Mammary epithelial cell (primary cell): ENCODE measurements at regions of chr6 and their contacts with region 1.

Region 1: DNA sequence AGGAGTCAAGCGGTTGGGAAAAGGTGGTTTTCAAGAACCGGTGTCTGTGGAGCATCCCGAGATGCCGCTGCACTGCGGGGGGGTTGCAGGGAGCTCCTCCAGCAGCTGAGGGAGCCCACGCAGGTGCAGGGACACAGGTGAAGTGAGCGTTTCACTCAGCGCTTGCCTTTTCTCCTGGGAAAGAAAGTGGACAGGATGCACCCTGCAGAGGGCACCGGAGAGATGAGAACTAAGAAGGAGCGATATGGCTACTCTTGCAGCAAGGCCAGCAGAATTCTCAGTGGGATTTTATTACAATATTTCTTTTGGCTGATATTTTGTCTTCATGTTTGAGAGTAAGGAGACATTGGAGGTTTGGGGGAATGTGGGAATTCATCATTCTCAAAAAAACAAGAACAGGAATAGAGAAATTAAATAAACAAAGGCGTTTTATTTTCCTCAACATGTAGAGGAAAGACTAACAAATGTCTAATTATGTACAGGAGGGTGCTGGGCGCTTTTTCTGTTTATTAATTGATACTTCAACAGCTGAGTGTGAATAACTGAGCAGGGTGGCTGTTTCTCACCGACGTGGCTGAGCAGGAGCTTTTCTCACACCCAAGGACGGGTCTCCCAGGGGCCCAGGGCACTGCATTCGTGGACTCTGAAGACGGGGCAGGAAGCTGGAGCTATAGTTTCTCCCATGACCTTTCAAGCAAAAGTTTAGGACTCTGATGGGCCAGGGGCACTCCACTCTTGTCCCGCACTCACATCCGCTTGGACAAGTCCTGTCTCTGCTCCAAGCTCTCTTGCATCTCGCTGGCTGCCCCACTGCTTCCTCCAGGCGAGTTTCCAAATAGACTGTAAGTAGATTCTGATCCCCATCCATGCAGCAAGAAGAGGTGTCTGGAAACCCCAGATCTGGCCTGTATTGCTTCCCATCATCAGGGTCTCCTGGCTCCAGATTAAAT is 176.1 kb downstream of the SMOC2 start:
- DNase-seq: no peak
- H3K4me3 ChIP-seq: no peak overlapping the region
- H3K27ac ChIP-seq: no peak overlapping the region
- H3K4me1 ChIP-seq: no peaks in the 10 kb centered on the region
- H3K27me3 ChIP-seq: no peaks in the 10 kb centered on the region
- CTCF ChIP-seq: no peak

Region 2: DNA sequence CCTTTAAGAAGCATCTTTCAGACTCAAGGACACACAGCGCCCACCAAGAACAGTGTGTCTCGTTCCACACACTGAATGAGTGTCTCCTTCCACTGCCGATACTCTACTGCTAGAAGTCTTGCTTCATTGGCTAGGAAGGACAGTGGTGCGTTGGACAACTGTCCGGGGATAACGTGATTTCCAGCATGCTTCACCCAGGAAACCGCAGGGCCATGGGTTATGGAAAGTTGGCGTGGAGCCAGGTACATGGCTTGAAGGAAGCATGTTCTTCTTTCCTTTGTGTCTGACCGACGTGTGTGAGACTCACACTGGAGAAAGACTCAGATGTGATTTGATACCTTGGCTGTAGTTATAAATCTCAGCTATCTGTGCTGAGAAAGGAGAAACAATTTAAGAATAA is 102.9 kb before region 1 on chr6:
- CTCF ChIA-PET with region 1: no interaction called
- dilution Hi-C with region 1: no loop called
- in situ Hi-C with region 1: no loop called
- intact Hi-C with region 1: no loop called
- DNase-seq: no peak
- H3K4me3 ChIP-seq: no peak overlapping the region
- H3K27ac ChIP-seq: no peak overlapping the region
- H3K4me1 ChIP-seq: no peaks in the 10 kb centered on the region
- H3K27me3 ChIP-seq: no peaks in the 10 kb centered on the region
- CTCF ChIP-seq: no peak

Region 3: GRCh38 chr6:168574699-168575195 is 42.3 kb before region 1 on chr6:
- CTCF ChIA-PET with region 1: no interaction called
- dilution Hi-C with region 1: loop called (anchors 5 kb)
- in situ Hi-C with region 1: no loop called
- intact Hi-C with region 1: no loop called
- DNase-seq: no peak
- H3K4me3 ChIP-seq: no peak overlapping the region
- H3K27ac ChIP-seq: no peak overlapping the region
- H3K4me1 ChIP-seq: no peaks in the 10 kb centered on the region
- H3K27me3 ChIP-seq: no peaks in the 10 kb centered on the region
- CTCF ChIP-seq: no peak